ENCODE measurements at regions of chr7 and their contacts with region 1.

Region 1: DNA sequence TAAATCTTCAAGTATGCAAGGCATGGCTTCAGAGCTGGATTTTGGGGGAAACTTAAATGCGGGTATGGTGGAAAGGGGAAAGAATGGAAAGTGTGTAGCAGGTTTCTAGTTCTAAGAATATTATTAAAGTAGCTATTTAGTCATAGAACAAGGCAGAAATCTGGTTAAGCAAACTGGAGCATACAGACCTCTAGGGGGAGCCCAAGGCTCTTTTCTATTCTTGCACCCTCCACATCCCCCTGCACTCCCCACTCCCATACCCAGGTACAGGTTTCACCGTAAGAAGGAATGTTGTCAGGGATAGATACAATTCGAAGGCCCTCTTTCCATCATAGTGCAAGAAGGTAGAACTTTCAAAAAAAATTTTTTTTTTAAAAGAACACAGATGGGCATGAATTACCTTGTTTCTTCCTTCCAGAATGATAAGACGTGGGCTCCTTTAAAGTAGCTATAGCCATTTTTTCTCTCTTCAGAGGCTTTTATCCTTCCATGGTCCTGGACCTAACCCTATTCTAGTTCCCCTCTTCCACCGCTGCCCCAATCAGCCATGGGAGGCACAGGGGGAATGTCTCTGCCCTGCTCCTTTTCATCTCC is 41.5 kb upstream of the SMIM30 start:
- DNase-seq: peak; percentile 23
- ATAC-seq: no peak
- H3K4me3 Mint-ChIP-seq: no peak overlapping the region
- H3K27ac Mint-ChIP-seq: no peak overlapping the region
- H3K4me1 Mint-ChIP-seq: no peaks in the 10 kb centered on the region
- H3K27me3 Mint-ChIP-seq: peaks cover 5% of the 10 kb centered on the region

Region 2: DNA sequence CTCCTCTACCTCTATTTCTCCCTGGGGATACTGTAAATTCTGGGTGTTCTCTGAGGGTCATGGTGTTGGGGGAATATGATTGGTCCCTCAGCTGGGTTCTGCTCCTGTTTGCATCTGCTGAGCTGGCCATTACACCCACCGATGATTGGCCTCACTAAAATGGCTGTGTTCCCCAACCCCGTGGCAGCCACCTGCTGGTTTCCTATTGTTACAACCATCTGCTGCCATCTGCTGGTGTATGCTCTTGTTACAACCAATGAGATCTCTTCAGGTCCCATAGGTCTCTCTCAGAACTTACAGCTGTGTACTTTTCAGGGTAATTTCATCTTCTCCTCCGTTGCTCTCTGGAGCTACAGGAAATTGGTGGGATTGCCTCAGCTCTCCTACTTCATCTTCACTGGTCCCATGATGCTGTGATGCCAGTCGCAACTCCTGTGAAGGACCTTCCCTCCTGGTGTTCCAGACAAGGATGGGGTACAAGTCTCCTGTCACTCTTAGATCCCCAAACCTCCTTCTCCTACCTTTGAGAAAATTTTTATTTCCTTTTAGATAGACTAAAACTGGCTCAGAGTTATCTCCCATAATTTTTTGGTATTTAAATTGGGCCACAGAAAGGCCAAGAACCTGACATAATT is 262.0 kb after region 1 on chr7:
- CTCF ChIA-PET with region 1: interaction called, 11 read pairs
- POLR2A ChIA-PET with region 1: no interaction called
- DNase-seq: peak; percentile 86
- ATAC-seq: peak; percentile 99
- H3K4me3 Mint-ChIP-seq: no peak overlapping the region
- H3K27ac Mint-ChIP-seq: peak overlapping the region; percentile 51
- H3K4me1 Mint-ChIP-seq: peaks cover 3% of the 10 kb centered on the region
- H3K27me3 Mint-ChIP-seq: no peaks in the 10 kb centered on the region